BJ (cell line): ENCODE measurements at regions of chr13 and their contacts with region 1.

Region 1: GRCh38 chr13:51286135-51287002 is 53.1 kb upstream of the SERPINE3 start:
- DNase-seq: no peak
- H3K4me3 ChIP-seq: no peak overlapping the region
- H3K27me3 ChIP-seq: peaks cover 2% of the 10 kb centered on the region; the same call in 1 of the 2 replicates
- CTCF ChIP-seq: peak; percentile 96

Region 2: DNA sequence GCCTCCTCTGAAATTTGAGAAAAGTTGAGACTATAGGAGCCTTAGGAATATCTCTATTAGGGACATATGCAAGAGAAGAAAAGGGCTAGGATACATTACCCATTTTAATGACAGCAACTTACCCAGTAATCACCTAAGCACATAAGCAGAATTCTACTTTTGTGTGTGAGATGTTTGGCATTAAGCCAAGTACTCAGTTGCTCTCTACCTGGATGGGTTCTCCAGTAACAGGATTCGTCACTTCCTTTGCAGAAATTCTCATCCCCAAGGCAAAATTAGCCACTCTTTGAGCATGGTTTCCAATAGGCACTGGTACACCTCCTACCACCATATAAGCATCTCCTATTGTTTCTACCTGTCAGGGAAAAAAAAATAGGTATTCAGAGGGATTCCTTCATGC is 270.4 kb before region 1 on chr13:
- CTCF ChIA-PET with region 1: no interaction called
- POLR2A ChIA-PET with region 1: no interaction called
- DNase-seq: no peak
- H3K4me3 ChIP-seq: no peak overlapping the region
- H3K27me3 ChIP-seq: peaks cover 2% of the 10 kb centered on the region; the same call in 1 of the 2 replicates
- CTCF ChIP-seq: no peak

Region 3: DNA sequence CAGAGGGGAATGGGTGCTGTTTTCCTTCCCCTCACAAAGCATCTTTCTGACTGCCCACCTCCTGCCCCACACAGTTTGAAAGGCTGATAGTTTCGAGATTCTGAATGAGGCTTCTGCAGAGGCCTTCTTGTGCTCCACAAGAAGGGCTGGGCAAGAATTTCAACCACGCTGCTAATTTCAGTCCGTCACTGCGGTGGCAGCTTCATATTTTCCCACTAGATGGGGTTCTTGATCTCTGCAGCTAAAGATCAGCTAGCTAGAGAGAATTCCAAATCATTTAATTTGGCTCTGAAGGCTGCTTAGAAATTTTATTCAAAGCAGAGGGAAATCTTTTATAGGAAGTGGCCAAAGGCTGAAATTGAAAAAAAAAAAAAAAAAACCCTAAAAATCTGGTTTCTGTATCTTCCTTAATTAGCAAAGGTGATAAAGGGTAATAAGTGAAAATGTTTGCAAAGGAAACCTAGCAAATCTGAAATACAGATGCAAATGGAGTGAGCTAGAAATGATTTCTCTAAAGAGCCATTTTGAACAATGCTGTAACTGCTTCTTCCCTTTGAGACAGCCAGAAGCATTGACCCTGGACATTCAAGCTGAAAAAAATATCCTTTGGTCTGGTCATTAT is 137.3 kb before region 1 on chr13:
- CTCF ChIA-PET with region 1: interaction called, 74 read pairs
- POLR2A ChIA-PET with region 1: no interaction called
- DNase-seq: no peak
- H3K4me3 ChIP-seq: no peak overlapping the region
- H3K27me3 ChIP-seq: peaks cover 5% of the 10 kb centered on the region; the same call in 1 of the 2 replicates
- CTCF ChIP-seq: peak; percentile 64

Region 4: DNA sequence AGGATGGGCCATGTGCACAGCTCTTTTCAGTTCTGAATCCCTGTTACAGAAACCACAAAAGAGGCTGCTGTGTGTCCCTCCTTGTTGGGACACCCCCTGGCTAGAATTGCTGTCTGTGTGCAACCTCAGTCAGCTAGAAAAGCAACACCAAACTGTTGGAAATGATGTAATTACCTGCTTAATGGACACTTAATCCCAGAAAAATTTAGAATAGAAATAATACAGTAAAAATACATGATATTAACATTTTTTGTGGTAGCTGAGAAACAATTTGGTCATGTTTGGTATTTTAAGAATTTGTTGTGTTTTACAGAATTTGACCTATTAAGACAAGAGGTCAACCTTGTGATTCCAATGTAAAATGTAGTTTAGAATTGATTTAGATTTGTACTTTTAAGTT is 17.3 kb before region 1 on chr13:
- CTCF ChIA-PET with region 1: interaction called, 38 read pairs
- POLR2A ChIA-PET with region 1: no interaction called
- DNase-seq: peak; percentile 81
- H3K4me3 ChIP-seq: no peak overlapping the region
- H3K27me3 ChIP-seq: peaks cover 17% of the 10 kb centered on the region
- CTCF ChIP-seq: no peak

Region 5: DNA sequence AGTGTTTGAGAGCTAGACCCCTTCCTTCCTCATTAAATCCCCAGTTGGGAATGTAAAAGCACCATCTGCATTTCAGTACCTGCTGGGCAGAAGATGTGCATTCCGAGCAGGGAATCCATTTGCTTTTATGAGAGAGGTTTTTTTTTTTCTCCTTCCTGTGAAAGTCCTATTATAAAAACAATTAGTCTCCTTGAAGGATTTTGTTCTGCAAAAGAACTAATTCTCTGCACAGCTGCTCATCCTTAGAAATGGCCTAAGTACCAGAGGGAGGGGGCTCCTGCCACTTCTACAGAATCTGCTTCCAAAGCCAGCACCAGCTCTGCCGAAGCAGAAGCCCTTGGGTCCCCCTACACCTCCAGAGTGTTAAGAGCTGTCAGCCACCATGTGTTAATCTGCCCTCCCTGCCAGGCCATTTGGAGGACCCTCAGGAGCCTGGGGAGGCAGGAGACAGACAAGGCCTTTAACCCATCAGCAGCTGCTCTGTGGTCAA is 16.7 kb after region 1 on chr13:
- CTCF ChIA-PET with region 1: interaction called, 29 read pairs
- POLR2A ChIA-PET with region 1: no interaction called
- DNase-seq: no peak
- H3K4me3 ChIP-seq: no peak overlapping the region
- H3K27me3 ChIP-seq: peaks cover 4% of the 10 kb centered on the region; the same call in 1 of the 2 replicates
- CTCF ChIP-seq: no peak

Region 6: GRCh38 chr13:51523082-51523518 is 236.7 kb after region 1 on chr13:
- CTCF ChIA-PET with region 1: no interaction called
- POLR2A ChIA-PET with region 1: no interaction called
- DNase-seq: no peak
- H3K4me3 ChIP-seq: no peak overlapping the region
- H3K27me3 ChIP-seq: no peaks in the 10 kb centered on the region
- CTCF ChIP-seq: no peak

Region 7: DNA sequence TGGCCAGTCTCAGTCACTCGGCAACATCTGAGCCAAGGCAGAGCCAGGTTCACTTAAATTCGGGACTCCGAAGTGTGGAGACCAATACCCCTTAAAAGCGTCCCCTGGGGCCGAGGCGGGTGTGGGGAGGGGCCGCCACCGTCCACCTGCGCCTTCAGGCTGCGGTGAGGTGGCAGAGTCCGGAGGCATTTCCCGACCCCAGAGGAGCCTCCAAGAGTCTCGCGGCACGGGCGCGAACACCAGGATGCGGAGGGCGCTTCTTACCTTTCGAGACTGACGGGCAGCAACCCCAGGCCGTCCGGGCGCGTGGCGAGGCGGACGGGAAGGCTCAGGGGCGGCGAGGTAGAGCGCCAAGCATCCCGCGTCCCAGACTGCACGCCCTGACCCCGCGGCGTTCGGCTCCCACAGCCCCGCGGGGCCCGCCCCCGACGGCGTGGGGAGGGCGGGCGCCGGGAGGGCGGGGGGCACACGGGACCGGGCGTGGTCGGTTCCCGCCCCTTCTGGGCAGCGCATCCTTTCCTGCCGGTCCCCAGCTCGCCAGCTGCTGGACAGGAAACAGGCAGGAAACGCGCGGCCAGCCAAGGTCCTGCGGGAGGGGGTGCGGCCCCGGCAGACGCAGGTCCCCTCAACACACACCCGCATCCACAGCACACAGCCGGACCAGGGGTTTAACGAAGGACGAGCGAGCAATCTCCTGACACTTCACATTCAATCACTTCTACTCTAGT is 1119.6 kb after region 1 on chr13 and contains the start of gene THSD1:
- CTCF ChIA-PET with region 1: no interaction called
- POLR2A ChIA-PET with region 1: no interaction called
- DNase-seq: no peak
- H3K4me3 ChIP-seq: peak within 1 kb of the TSS; percentile 78
- H3K27me3 ChIP-seq: no peaks in the 10 kb centered on the region
- CTCF ChIP-seq: no peak
- polyA plus RNA-seq, gene THSD1: 4.3 and 4.5 TPM in 2 replicates